CD4-positive, alpha-beta memory T cell (primary cell): ENCODE measurements at regions of chr7 and their contacts with region 1.

Region 1: DNA sequence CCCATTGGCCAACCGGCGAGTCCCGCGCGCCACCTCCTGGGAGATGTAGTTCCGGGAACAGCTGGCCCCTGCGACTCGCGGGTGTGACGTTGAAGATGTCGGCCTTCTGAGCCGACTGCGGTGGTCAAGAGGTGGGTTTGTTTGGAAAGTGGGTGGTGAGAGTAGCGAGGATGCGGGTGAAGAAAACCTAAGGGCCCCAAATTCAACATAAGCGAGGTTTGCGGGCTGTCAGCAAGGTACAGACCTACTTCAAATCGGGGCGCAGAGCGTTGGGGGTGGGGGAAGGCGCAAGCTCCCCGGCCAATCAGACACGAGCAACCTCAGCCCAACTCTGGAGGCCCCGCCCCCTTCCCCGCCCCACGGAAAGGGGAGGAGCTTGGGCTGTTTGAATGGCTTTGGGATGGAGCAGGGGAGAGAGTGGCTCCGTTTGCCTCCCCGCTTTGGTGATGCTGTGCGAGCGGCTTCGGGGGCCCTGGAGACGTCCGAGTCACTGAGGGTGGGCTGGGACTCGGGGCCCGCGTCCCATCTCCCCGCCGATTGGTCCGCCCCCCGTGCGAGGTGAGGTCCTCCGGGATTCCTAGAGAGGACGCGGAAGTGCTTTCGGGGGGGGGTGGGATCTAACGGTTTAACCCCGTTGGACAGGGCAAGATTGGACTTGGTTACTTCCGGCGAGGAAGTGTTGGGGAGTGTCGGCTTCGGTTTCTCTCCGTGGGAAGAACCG is at the start of gene ZKSCAN5:
- DNase-seq: peak; percentile 97 to 99 (median 97)
- H3K4me3 ChIP-seq: peak within 1 kb of the TSS; percentile 94 to 95
- H3K4me3 Mint-ChIP-seq: peak within 1 kb of the TSS; percentile 93 to 100 (median 99)
- H3K27ac ChIP-seq: peak within 1 kb of the TSS; percentile 86
- H3K27ac Mint-ChIP-seq: peak within 1 kb of the TSS; percentile 89 to 100 (median 99)
- H3K4me1 ChIP-seq: peaks cover 24% of the 10 kb centered on the region
- H3K4me1 Mint-ChIP-seq: peaks cover 18 to 42% (median 29%) of the 10 kb centered on the region in 4 donors
- H3K27me3 ChIP-seq: no peaks in the 10 kb centered on the region
- H3K27me3 Mint-ChIP-seq: no peaks in the 10 kb centered on the region
- total RNA-seq, gene ZKSCAN5: 8.8 to 9.3 TPM

Region 2: DNA sequence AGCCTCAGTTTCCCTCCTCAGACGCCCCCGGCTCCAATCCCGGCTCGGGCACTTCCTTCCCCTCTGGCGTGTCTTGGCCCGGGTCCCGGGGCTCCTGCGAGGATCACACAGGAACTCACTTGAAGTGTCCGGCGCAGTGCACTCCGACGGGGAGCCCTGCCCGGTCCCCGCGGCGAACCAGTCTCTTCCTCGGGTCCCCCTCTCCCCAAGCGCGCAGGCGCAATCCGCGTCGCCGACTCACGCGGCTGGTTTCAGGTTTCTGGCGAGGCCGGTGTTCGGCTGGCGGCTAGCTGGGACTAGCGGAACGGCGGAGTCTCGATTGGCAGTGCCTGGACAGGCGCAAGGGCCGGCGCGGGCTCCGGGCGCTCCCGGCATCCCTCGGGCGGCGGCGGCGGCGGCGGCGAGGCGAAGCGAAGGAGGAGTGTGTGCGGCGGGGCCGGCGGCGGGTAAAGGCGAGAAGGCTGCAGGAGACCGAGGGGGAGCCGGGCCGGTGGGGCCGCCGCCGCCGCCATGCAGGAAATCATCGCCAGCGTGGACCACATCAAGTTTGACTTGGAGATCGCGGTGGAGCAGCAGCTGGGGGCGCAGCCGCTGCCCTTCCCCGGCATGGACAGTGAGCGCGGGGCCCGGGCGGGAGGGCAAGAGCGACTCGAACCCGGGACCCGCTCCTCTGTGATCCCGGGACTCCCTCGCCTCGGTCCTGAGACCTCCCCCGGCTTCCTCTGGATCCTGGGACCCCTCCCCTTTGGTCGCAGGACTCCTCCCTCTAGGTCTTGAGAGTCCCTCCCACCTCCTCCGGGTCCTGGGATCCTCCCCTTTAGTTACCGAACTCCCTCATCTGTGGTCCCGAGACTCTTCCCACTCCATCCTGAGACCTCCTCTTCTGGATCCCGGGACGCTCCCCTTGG is 65.9 kb before region 1 on chr7 and contains the starts of genes CPSF4 and PTCD1:
- CTCF ChIA-PET with region 1: no interaction called
- POLR2A ChIA-PET with region 1: interaction called, 6 read pairs
- intact Hi-C with region 1: loop called (anchors 1 kb)
- DNase-seq: peak; percentile 84 to 87 (median 84)
- H3K4me3 ChIP-seq: peak within 1 kb of the TSS; percentile 77 to 93
- H3K4me3 Mint-ChIP-seq: peak within 1 kb of the TSS; percentile 95 to 98 (median 97)
- H3K27ac ChIP-seq: peak within 1 kb of the TSS; percentile 61
- H3K27ac Mint-ChIP-seq: peak within 1 kb of the TSS; percentile 91 to 96 (median 95)
- H3K4me1 ChIP-seq: peaks cover 17% of the 10 kb centered on the region
- H3K4me1 Mint-ChIP-seq: peaks cover 15 to 40% (median 30%) of the 10 kb centered on the region in 4 donors
- H3K27me3 ChIP-seq: no peaks in the 10 kb centered on the region
- H3K27me3 Mint-ChIP-seq: no peaks in the 10 kb centered on the region
- total RNA-seq, gene CPSF4: 49.2 to 54.7 TPM
- total RNA-seq, gene PTCD1: 7.4 to 7.7 TPM

Region 3: DNA sequence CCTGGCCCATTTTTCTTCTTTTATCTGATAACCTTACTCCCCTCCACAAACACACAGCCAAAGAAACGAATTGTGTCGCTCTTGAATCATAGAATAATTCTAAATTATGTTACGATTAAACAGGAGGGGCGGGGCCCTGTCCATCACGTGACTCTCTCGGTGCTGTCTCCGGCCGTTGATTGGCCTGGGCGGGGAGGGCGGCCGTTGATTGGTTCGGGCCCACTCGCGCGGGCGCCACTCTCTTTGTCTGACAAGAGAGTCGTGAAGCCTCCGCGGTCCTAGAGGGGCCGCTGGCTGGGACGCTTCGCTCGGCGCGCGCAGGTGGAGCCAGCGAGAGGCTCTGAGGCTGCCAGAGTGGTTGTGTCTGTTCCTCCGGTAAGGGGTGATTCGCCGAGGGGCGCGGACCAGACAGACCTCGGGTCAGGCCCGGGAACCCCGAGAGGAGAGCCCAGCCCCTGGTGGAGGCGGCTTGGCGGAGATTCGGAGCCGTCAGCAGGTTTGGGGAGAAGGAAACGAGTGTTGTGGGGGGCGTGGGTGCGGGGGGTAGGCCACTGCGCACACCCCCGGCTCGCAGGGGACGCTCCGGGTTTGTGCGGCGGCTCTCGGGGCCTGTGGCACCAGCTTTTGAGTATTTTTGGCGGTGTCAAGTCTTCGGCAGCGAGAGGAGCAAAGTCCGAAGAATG is 32.1 kb before region 1 on chr7 and contains the start of gene ZNF789:
- CTCF ChIA-PET with region 1: interaction called, 3 read pairs
- POLR2A ChIA-PET with region 1: interaction called, 25 read pairs
- intact Hi-C with region 1: loop called (anchors 1 kb)
- DNase-seq: peak; percentile 94 to 99 (median 95)
- H3K4me3 ChIP-seq: peak within 1 kb of the TSS; percentile 90 to 93
- H3K4me3 Mint-ChIP-seq: peak within 1 kb of the TSS; percentile 92 to 99 (median 96)
- H3K27ac ChIP-seq: peak within 1 kb of the TSS; percentile 80
- H3K27ac Mint-ChIP-seq: peak within 1 kb of the TSS; percentile 90 to 98 (median 95)
- H3K4me1 ChIP-seq: peaks cover 14% of the 10 kb centered on the region
- H3K4me1 Mint-ChIP-seq: peaks cover 17 to 49% (median 31%) of the 10 kb centered on the region in 4 donors
- H3K27me3 ChIP-seq: no peaks in the 10 kb centered on the region
- H3K27me3 Mint-ChIP-seq: no peaks in the 10 kb centered on the region
- total RNA-seq, gene ZNF789: 20.8 to 21.2 TPM

Region 4: DNA sequence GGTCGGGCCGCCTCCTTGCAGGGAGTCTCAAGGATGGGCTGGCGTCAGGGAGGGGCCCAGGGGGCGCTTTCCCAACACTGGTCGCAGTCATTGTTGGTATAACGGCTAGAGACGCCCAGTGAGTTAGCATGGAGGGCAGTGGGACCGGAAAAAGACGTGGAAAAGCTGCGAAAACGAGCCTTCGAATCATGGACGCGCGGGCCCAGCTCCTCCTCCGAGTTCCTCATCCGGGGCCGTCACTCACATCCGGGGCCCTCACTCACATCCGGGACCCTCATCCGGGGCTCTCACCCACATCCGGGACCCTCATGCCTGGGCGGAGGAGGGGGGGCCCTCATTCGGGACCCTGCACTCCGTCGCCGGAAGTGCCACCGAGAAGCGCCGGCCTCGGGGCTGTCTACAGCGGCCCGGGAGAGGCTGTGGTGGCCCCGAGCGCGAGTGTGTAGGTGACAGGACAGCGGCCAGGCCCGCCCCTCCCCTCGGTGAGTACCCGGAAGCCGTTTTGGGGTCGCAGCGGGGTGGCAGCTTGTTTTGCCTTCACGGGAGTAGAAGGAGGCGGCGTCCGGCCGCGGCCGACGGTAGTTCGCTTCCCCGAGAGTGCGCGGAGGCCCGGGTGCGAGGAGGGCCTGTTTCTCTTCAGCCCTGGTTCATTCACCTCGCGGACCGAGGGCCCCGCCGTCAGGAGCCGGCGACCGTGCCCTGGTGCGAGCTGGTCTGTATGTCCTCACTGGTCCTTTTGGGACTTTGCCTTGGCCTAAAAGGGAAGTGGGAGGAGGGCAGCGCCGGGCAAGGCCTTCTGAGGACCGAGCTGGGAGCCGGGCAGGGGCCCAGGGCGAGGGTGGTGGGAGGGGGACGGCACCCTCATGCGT is 53.8 kb after region 1 on chr7 and contains the start of gene ZNF655:
- CTCF ChIA-PET with region 1: interaction called, 5 read pairs
- POLR2A ChIA-PET with region 1: interaction called, 86 read pairs
- intact Hi-C with region 1: loop called (anchors 1 kb)
- DNase-seq: peak; percentile 92 to 95 (median 92)
- H3K4me3 ChIP-seq: peak within 1 kb of the TSS; percentile 76 to 97
- H3K4me3 Mint-ChIP-seq: peak within 1 kb of the TSS; percentile 91 to 100 (median 98)
- H3K27ac ChIP-seq: peak within 1 kb of the TSS; percentile 98
- H3K27ac Mint-ChIP-seq: peak within 1 kb of the TSS; percentile 96 to 99 (median 99)
- H3K4me1 ChIP-seq: peaks cover 43% of the 10 kb centered on the region
- H3K4me1 Mint-ChIP-seq: peaks cover 27 to 56% (median 42%) of the 10 kb centered on the region in 4 donors
- H3K27me3 ChIP-seq: no peaks in the 10 kb centered on the region
- H3K27me3 Mint-ChIP-seq: no peaks in the 10 kb centered on the region
- total RNA-seq, gene ZNF655: 137 to 150 TPM

Region 5: GRCh38 chr7:99624484-99624883 is 119.7 kb after region 1 on chr7:
- CTCF ChIA-PET with region 1: no interaction called
- POLR2A ChIA-PET with region 1: interaction called, 13 read pairs
- intact Hi-C with region 1: no loop called
- DNase-seq: peak; percentile 74 to 84 (median 80)
- H3K4me3 ChIP-seq: peak overlapping the region in 1 of 2 donors; percentile 27
- H3K4me3 Mint-ChIP-seq: peak overlapping the region; percentile 78 to 94 (median 87)
- H3K27ac ChIP-seq: peak overlapping the region; percentile 61
- H3K27ac Mint-ChIP-seq: peak overlapping the region; percentile 86 to 99 (median 96)
- H3K4me1 ChIP-seq: peaks cover 27% of the 10 kb centered on the region
- H3K4me1 Mint-ChIP-seq: peaks cover 28 to 56% (median 43%) of the 10 kb centered on the region in 4 donors
- H3K27me3 ChIP-seq: no peaks in the 10 kb centered on the region
- H3K27me3 Mint-ChIP-seq: no peaks in the 10 kb centered on the region